ENCODE measurements at regions of chr22 and their contacts with region 1.

Region 1: DNA sequence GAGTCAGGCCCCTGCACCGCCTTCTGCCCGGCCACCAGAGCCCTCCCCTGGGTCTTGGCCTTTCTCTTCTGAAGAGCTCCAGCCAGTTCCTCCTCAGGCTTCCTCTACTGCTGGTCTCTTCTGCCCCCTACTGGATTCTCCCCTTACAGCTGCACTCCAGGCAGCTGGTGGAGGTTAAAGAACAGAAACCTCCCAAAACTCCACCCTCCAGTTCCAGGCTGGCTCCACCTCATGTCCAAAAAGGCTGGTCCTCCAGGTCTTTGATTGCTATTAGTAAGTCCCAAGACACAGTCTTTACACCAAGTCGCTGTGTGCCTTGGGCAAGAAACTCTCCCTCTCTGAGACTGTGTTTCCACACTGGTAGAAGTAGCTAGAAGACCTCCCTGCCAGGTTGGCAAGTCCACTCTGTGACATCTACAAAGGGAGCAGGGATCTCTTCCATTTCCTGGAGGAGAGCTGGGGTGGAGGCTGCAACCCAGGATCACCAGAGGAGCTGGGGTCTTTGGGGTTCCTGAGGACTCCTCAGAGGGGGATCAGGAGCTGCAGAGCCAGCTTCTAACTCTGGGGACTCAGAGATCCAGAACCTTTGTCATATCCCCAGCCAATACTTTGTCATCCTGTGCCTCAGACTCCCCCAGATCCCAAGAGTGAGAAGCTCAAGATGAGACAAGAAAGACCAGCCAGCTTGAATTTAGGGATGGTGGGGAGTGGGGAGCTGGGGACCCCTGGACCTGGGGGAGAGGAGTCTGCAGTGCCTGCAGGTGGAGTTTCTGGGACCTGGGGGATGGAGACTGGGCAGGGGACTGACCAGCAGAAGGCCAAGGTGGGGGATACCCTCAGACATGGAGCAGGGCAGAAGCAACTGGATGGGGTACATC is 3.4 kb upstream of the IGLL5 start:
- DNase-seq: peak; percentile 77
- CTCF ChIP-seq: peak; percentile 85

Region 2: GRCh38 chr22:22720201-22720723 is 164.0 kb before region 1 on chr22:
- CTCF ChIA-PET with region 1: interaction called, 18 read pairs
- POLR2A ChIA-PET with region 1: no interaction called
- DNase-seq: peak; percentile 72
- CTCF ChIP-seq: peak; percentile 71

Region 3: GRCh38 chr22:22787786-22788459 is 96.3 kb before region 1 on chr22:
- CTCF ChIA-PET with region 1: interaction called, 98 read pairs
- POLR2A ChIA-PET with region 1: no interaction called
- DNase-seq: peak; percentile 79
- CTCF ChIP-seq: peak; percentile 85

Region 4: DNA sequence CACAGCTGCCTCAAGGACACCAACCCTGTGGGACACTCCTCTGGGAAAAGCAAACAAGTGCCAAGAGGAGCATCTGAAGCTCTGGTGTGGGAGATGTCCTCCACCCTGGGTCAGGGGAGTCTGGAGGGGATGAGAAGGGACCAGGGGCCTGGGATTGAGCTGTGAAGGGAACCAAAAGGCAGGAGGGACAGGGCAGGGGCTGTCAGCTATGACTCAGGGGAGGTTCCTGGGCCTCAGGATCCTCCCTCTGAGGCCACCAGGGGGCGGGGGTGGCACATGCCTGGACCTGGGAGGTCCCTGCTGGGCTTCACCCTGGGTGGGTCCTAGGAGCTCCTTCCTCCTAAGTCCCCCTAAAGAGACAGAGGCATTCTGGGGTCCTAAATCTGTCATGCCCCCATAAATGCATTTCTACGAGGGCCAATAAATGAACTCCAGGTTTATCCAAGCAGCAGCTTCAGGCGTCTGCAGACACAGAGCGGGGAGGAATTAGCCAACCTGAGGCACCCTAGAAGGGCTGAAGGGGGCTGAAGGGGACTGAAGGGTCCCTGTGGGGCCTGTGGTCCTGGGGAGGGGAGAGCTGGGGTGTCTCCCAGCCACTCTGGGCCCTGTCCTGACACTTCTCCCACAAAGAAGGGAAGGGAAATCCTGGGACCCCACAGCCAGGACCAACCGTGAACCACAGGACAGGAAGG is 28.5 kb before region 1 on chr22:
- CTCF ChIA-PET with region 1: interaction called, 211 read pairs
- POLR2A ChIA-PET with region 1: interaction called, 4 read pairs
- DNase-seq: peak; percentile 65
- CTCF ChIP-seq: peak; percentile 79

Region 5: DNA sequence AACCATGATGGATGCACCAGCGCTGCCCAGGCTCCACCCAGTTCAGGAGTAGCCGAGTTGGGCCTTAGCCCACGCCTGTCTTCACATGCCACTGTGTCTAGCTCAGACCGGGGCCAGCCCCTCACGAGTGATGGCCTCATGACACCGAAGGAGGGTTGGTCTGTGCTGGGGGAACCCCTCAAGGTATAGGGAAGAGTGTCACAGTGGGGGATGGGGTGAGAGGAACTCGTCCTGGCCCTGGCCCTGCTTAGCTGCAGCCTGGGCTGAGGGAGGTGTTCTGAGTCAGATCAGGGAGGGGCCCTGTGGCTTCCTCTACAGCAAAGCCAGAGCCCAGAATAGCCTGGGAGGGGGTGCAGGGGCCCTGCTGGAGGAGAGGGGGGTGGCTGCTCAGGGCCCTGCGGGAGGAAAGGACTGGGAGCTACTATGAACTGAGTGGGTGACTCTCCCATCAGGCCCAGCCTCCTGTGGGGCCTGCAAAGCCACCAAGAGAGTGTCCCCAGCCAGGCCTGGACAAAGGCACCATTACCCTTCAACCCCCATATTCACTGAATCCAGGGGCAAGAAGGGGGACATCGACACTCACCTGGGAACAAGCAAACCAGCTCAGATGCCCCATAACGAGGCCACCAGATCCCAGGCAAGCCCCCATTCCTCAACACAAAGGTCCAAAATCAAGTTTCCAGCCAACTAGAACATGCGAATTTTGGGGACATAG is 44.6 kb after region 1 on chr22:
- CTCF ChIA-PET with region 1: interaction called, 49 read pairs
- POLR2A ChIA-PET with region 1: interaction called, 9 read pairs
- DNase-seq: peak; percentile 89
- CTCF ChIP-seq: no peak

Region 6: GRCh38 chr22:22959147-22959827 is 75.0 kb after region 1 on chr22:
- CTCF ChIA-PET with region 1: interaction called, 148 read pairs
- POLR2A ChIA-PET with region 1: no interaction called
- DNase-seq: peak; percentile 63
- CTCF ChIP-seq: peak; percentile 88

Region 7: GRCh38 chr22:23113067-23113846 is 229.0 kb after region 1 on chr22:
- CTCF ChIA-PET with region 1: no interaction called
- POLR2A ChIA-PET with region 1: no interaction called
- DNase-seq: no peak
- CTCF ChIP-seq: no peak

Region 8: GRCh38 chr22:23183061-23183698 is 298.9 kb after region 1 on chr22:
- CTCF ChIA-PET with region 1: no interaction called
- POLR2A ChIA-PET with region 1: no interaction called
- DNase-seq: no peak
- CTCF ChIP-seq: no peak